ENCODE measurements at regions of chr18 and their contacts with region 1.

Region 1: DNA sequence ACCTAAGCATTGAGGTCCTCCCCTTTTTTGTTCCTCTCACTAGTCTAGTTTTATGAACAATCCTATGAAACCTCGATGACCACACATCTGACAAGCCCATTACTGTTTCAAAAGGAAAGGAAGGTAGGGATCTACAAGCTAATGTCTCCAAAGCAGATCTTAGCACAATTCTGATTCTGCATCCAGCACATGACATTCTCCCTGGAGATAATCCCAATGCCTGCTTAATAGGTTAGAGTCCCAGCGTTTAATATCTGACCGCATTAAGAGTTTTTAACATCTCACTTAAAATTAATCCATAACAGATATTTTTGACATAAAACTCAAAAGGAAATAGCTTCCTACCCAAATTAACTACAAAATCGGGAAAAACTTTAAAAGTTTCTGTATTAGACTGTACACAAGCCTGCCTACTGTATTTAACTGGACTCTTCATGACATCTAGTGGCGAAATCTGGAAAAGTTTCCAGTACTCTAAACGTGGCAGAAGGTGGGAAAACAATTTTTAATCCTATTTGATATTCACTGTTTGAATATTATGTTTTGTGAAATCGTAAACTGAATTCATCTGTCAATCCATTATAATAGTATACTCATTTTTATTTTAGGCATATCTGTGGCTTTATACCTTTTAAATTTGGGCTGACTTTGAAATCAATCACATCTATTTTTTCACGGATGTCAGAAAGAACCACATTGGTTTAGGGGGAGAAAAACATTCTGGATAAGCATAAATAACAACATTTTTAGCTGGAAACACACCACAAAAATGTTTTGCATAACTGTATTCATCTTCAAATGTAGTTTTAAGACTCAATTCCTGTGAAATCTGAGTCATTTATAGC is 62.4 kb downstream of the TXNL1 start:
- H3K4me3 Mint-ChIP-seq: no peak overlapping the region
- H3K27ac Mint-ChIP-seq: no peak overlapping the region
- H3K4me1 Mint-ChIP-seq: peaks cover 35% of the 10 kb centered on the region
- H3K27me3 Mint-ChIP-seq: no peaks in the 10 kb centered on the region

Region 2: DNA sequence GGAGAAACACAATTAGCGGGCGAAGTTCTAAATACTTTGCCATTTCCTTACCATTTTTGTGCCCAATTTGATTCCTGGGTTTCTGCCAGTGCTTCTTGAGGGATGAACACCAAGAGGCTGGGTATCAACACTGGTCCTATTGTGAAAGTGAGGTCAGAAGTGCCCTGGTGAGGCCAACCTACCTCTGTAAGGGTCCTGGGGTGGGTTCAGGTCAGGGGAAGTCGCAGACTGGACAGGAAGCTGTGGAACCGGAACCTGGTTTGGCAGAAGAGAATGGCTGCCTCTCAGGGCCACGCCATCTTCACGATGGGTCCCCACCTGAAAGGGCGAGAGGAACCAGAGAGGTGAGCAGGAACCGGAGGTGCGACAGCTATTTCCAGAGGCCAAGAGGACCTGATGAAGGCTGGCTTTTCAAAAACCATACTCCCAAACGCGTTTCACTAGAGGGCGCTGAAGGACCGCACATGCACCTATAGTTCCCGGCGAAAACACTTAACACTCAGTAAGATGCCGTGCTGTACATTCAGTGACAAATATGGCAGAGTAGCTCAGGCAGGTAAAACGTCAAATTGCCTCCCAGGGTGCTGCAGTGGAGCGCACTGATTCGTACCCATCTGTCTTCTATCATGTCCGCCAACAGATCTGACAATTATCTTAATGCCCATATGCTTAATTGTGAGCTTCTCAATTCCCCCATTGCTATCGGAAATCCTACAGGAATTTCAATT is 1341.5 kb before region 1 on chr18:
- intact Hi-C with region 1: loop called (anchors 2 kb)
- H3K4me3 Mint-ChIP-seq: no peak overlapping the region
- H3K27ac Mint-ChIP-seq: peak overlapping the region; percentile 17
- H3K4me1 Mint-ChIP-seq: peaks cover 21% of the 10 kb centered on the region
- H3K27me3 Mint-ChIP-seq: no peaks in the 10 kb centered on the region

Region 3: DNA sequence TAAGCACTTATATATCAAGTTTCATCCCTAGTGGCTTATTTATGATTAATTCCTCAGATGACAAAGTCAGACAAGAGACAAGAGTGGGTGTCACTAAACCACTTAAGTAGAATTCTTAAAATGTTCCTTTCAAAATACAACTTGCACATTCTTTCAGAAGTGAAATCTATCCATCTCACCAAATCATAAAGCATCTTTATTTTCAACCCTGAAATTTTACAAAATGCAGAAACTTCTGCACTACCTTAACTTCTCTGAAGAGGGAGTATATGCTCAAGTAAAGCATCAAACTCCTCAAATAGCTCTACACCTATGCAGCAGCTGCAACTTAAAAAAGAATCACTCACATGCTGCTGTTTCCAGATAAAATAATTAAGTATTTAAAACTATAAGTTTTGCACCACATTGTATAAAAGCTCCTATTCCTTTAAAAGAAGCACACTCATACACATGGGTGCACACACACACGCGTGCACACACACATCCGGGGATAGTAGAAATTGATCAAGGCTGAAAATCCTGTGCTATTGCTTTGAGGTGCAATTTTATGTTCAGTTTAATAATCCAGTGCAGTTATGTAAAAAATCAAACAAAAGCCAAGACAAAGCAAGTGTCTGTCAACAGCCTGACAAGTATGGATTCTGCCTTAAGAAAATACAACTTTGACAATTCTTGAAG is 1232.5 kb before region 1 on chr18:
- intact Hi-C with region 1: loop called (anchors 5 kb)
- H3K4me3 Mint-ChIP-seq: no peak overlapping the region
- H3K27ac Mint-ChIP-seq: no peak overlapping the region
- H3K4me1 Mint-ChIP-seq: peaks cover 7% of the 10 kb centered on the region
- H3K27me3 Mint-ChIP-seq: no peaks in the 10 kb centered on the region

Region 4: GRCh38 chr18:55415258-55415871 is 1160.7 kb before region 1 on chr18:
- intact Hi-C with region 1: loop called (anchors 2 kb)
- H3K4me3 Mint-ChIP-seq: no peak overlapping the region
- H3K27ac Mint-ChIP-seq: no peak overlapping the region
- H3K4me1 Mint-ChIP-seq: peaks cover 13% of the 10 kb centered on the region
- H3K27me3 Mint-ChIP-seq: no peaks in the 10 kb centered on the region

Region 5: GRCh38 chr18:55781481-55781957 is 794.5 kb before region 1 on chr18:
- intact Hi-C with region 1: loop called (anchors 10 kb)
- H3K4me3 Mint-ChIP-seq: no peak overlapping the region
- H3K27ac Mint-ChIP-seq: no peak overlapping the region
- H3K4me1 Mint-ChIP-seq: peaks cover 19% of the 10 kb centered on the region
- H3K27me3 Mint-ChIP-seq: peaks cover 24% of the 10 kb centered on the region

Region 6: DNA sequence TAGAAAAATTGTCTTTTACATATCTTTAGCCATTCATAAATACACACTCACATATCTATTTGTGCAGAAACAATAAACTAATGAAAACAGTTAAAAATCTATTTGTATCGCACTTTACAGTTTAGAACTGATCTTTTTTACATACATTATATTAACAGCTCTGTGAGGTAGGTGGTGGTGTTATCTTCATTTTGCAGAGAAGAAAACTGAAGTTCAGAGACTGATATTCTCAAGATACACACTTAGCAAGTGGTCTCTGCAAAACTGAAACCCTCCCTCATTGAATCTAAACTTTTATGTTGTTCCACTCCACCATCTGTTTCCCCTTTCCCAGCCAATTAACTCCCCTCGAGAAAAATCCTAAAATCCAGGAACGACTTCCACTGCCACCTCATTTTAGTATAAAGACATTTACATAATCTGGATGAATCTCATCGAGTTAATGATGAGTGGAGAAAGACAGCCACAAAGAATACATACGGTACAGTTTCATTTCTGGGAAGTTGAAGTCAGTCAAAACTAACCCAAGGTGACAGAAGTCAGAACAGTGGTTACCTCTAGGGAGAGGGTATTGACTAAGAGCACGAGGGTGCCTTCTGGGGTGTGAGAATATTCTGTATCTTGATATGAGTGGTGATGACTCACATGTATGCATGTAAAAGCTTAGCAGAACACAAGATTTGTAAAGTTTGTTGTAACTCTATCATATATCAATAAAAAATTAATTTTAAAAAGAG is 463.9 kb before region 1 on chr18:
- intact Hi-C with region 1: loop called (anchors 10 kb)
- H3K4me3 Mint-ChIP-seq: no peak overlapping the region
- H3K27ac Mint-ChIP-seq: no peak overlapping the region
- H3K4me1 Mint-ChIP-seq: peaks cover 33% of the 10 kb centered on the region
- H3K27me3 Mint-ChIP-seq: peaks cover 9% of the 10 kb centered on the region

Region 7: GRCh38 chr18:56257205-56257604 is 318.8 kb before region 1 on chr18:
- intact Hi-C with region 1: loop called (anchors 5 kb)
- H3K4me3 Mint-ChIP-seq: peak overlapping the region; percentile 41
- H3K27ac Mint-ChIP-seq: peak overlapping the region; percentile 67
- H3K4me1 Mint-ChIP-seq: peaks cover 23% of the 10 kb centered on the region
- H3K27me3 Mint-ChIP-seq: no peaks in the 10 kb centered on the region

Region 8: DNA sequence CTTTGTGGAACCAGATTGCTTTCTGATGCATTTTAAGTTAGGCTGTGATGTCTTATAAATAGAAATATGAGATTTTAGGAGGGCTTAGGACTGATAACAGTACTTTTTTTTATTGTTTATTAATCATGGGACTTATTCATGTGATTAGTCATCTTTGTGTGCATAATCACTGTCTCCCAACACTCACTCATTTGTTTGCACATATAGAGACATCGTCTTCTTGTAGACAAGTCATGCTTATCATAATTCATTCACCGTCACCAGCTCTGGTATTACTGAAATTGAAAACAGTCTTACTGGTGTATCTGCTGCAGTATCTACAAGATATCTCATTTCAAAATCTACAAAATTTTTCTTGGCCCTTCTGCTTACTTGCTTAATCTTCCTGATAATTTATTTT is 120.9 kb after region 1 on chr18:
- intact Hi-C with region 1: no loop called
- H3K4me3 Mint-ChIP-seq: no peak overlapping the region
- H3K27ac Mint-ChIP-seq: no peak overlapping the region
- H3K4me1 Mint-ChIP-seq: no peaks in the 10 kb centered on the region
- H3K27me3 Mint-ChIP-seq: no peaks in the 10 kb centered on the region

Region 9: DNA sequence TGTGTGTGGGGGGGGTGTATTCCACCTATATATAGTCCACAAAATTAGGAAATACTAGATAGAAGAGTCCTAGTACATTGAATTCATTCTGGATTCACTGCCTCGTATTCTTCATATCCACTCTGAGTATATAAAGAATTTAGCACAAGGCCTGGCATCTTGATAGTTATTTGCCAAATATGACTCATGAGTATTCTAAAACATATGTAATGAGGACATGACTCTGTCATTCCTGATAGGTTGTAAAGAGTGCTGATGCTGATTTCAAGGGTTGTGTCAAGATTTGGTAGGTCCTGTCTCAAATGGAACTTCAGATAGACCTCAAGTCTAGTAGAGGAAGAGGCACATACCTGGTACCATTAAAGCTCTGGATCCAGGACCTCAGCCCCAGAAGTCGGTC is 397.4 kb after region 1 on chr18:
- intact Hi-C with region 1: no loop called
- H3K4me3 Mint-ChIP-seq: no peak overlapping the region
- H3K27ac Mint-ChIP-seq: no peak overlapping the region
- H3K4me1 Mint-ChIP-seq: no peaks in the 10 kb centered on the region
- H3K27me3 Mint-ChIP-seq: no peaks in the 10 kb centered on the region

Region 10: DNA sequence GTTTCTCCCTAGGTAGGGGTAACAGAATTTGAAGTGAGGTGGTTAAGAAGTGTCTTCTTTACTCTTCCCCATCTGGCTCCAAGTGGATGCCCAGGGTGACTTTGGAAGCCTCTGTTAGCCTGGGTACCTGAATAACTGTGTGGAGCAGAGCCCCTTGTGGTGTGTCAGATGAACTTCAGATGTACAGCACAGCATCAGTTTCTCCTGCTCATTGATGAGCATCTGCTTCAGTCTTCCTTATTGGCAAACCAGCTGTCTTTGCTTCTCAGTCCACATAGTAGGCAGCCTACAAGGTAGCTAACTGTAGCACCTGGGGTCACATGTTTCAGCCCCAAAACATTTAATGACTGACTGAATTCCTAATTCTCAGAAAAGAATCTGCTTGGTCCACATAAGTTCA is 1283.3 kb after region 1 on chr18:
- intact Hi-C with region 1: no loop called
- H3K4me3 Mint-ChIP-seq: no peak overlapping the region
- H3K27ac Mint-ChIP-seq: no peak overlapping the region
- H3K4me1 Mint-ChIP-seq: no peaks in the 10 kb centered on the region
- H3K27me3 Mint-ChIP-seq: peaks cover 1% of the 10 kb centered on the region

Measured in dendritic cell treated with granulocyte-macrophage colony-stimulating factor and Interleukin-4, amounts not matched to agents 40 ng/mL and 50 ng/mL, for 4 days (primary cell).